Activated CD4-positive, alpha-beta memory T cell treated with anti-CD3 and anti-CD28 coated beads, Interleukin-2, amount 10 ng/mL, durations not matched to agents 7 days and 5 days (primary cell): ENCODE measurements at regions of chr16 and their contacts with region 1.

Region 1: GRCh38 chr16:74309789-74310781 is 13.5 kb downstream of the PSMD7 start:
- DNase-seq: peak; percentile 22
- H3K4me3 Mint-ChIP-seq: no peak overlapping the region
- H3K27ac Mint-ChIP-seq: no peak overlapping the region
- H3K4me1 Mint-ChIP-seq: peaks cover 5% of the 10 kb centered on the region
- H3K27me3 Mint-ChIP-seq: no peaks in the 10 kb centered on the region

Region 2: DNA sequence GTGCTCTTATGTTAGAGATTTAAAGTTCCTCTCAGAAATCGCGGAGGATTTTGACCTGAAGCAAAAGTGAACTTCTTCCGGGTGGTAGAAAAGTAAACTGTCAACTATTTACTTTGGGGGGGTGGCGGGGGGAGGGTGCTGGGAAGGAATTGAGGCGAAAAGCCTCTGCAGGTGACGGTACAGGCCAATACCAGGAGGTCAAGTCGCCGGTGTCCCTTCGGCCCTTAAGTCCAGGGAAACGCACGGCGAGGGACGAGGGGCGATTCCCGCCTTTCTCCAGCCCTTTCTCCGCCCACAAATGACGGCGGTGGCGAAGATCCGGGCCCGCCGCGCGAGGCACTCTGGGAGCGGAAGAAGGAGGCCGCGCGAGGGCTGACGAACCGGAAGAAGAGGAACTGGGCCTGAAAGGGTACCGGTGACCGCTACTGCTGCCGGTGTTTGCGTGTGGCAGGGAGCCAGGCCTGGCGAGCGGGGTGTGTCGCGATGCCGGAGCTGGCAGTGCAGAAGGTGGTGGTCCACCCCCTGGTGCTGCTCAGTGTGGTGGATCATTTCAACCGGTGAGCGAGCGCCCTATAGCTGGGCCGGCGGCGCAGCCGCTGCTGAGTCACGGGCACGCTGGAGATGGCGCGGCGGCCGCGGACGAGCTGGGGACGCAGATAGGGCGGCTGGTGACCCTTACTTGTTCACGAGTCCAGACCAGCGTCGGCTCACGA is 13.5 kb before region 1 on chr16 and contains the start of gene PSMD7:
- CTCF ChIA-PET with region 1: interaction called, 17 read pairs
- POLR2A ChIA-PET with region 1: interaction called, 12 read pairs
- DNase-seq: peak; percentile 92
- H3K4me3 Mint-ChIP-seq: peak within 1 kb of the TSS; percentile 87
- H3K27ac Mint-ChIP-seq: peak within 1 kb of the TSS; percentile 90
- H3K4me1 Mint-ChIP-seq: peaks cover 44% of the 10 kb centered on the region
- H3K27me3 Mint-ChIP-seq: no peaks in the 10 kb centered on the region
- total RNA-seq, gene PSMD7: 95.0 to 97.6 TPM

Region 3: GRCh38 chr16:74431516-74431915 is 121.4 kb after region 1 on chr16:
- CTCF ChIA-PET with region 1: interaction called, 12 read pairs
- POLR2A ChIA-PET with region 1: interaction called, 3 read pairs
- DNase-seq: no peak
- H3K4me3 Mint-ChIP-seq: no peak overlapping the region
- H3K27ac Mint-ChIP-seq: no peak overlapping the region
- H3K4me1 Mint-ChIP-seq: no peaks in the 10 kb centered on the region
- H3K27me3 Mint-ChIP-seq: peaks cover 7% of the 10 kb centered on the region